ENCODE measurements at regions of chr2 and their contacts with region 1.

Region 1: GRCh38 chr2:136052369-136053362 is 65.3 kb downstream of the CXCR4 start:
- DNase-seq: no peak
- ATAC-seq: peak; percentile 67
- H3K4me3 ChIP-seq: no peak overlapping the region
- H3K27ac ChIP-seq: peak overlapping the region; percentile 42
- H3K4me1 ChIP-seq: peaks cover 36% of the 10 kb centered on the region
- H3K27me3 ChIP-seq: no peaks in the 10 kb centered on the region
- CTCF ChIP-seq: no peak
- EP300 ChIP-seq: peak in 1 of 2 experiments; percentile 77; a peak in 2 of 4 replicates
- POLR2A ChIP-seq: no peak
- RAD21 ChIP-seq: 0 out of 2 replicates have a peak, but pooled peaks have one; percentile 1

Region 2: GRCh38 chr2:135985018-135985825 is 67.4 kb before region 1 on chr2 and contains the start of gene DARS1:
- CTCF ChIA-PET with region 1: interaction called, 7 read pairs
- POLR2A ChIA-PET with region 1: interaction called, 68 read pairs
- RAD21 ChIA-PET with region 1: interaction called, 88 read pairs
- SMC1A ChIA-PET with region 1: interaction called, 102 read pairs
- in situ Hi-C with region 1: no loop called
- intact Hi-C with region 1: loop called (anchors 1 kb)
- DNase-seq: peak; percentile 79
- ATAC-seq: peak; percentile 86
- H3K4me3 ChIP-seq: peak within 1 kb of the TSS; percentile 88
- H3K27ac ChIP-seq: peak within 1 kb of the TSS; percentile 95
- H3K4me1 ChIP-seq: peaks cover 8% of the 10 kb centered on the region
- H3K27me3 ChIP-seq: no peaks in the 10 kb centered on the region
- CTCF ChIP-seq: no peak
- EP300 ChIP-seq: peak in 1 of 2 experiments; percentile 31; a peak in 2 of 4 replicates
- POLR2A ChIP-seq: peak; percentile 95
- RAD21 ChIP-seq: no peak
- polyA plus RNA-seq, gene DARS1: 102 to 134 TPM

Region 3: GRCh38 chr2:136019306-136019705 is 33.4 kb before region 1 on chr2:
- CTCF ChIA-PET with region 1: interaction called, 33 read pairs
- POLR2A ChIA-PET with region 1: interaction called, 80 read pairs
- RAD21 ChIA-PET with region 1: interaction called, 348 read pairs
- SMC1A ChIA-PET with region 1: interaction called, 961 read pairs
- in situ Hi-C with region 1: no loop called
- intact Hi-C with region 1: no loop called
- DNase-seq: peak; percentile 40
- ATAC-seq: peak; percentile 78
- H3K4me3 ChIP-seq: no peak overlapping the region
- H3K27ac ChIP-seq: no peak overlapping the region
- H3K4me1 ChIP-seq: peaks cover 8% of the 10 kb centered on the region
- H3K27me3 ChIP-seq: no peaks in the 10 kb centered on the region
- CTCF ChIP-seq: no peak
- EP300 ChIP-seq: peak; percentile 78 to 87; a peak in 2 of 4 replicates
- POLR2A ChIP-seq: no peak
- RAD21 ChIP-seq: 0 out of 2 replicates have a peak, but pooled peaks have one; percentile 6

Region 4: DNA sequence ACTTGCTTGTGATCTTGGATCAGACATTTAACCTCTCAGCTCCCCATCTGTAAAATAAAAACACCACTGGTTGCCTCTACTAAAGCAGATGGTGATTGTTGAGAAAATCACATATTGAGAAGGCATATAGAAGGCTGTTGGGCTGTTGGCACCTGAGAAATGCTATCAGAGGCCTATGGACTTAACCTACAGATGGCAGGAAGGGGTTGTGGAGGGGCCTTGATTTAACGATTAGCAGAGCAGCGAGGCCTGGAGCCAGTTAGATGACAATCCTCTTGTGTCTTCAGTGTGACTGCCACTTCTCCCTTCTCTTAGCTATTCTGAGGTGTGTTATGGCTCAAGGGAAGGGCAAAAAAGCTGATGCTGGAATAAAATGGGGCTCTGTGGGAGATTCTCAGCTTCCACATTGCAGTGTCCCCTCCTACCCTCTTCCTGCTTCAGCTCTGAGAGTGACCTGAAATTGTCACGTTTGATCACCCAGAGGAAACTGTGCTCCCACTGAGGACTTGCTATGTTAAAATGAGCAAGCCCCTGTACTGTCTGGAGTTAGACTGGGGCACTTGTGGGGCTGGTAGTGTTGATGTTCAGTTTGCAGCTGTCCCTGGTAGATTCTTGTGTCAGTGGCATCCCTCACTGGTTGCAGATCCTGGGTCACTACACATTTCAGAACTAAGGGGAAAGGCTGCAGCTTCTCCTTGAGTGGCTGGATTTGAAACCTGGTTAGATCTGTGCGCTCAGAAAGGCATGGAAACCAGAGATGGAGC is 33.8 kb after region 1 on chr2:
- CTCF ChIA-PET with region 1: no interaction called
- POLR2A ChIA-PET with region 1: no interaction called
- RAD21 ChIA-PET with region 1: interaction called, 5 read pairs
- SMC1A ChIA-PET with region 1: interaction called, 26 read pairs
- in situ Hi-C with region 1: no loop called
- intact Hi-C with region 1: no loop called
- DNase-seq: no peak
- ATAC-seq: peak; percentile 51
- H3K4me3 ChIP-seq: no peak overlapping the region
- H3K27ac ChIP-seq: no peak overlapping the region
- H3K4me1 ChIP-seq: no peaks in the 10 kb centered on the region
- H3K27me3 ChIP-seq: no peaks in the 10 kb centered on the region
- CTCF ChIP-seq: no peak
- EP300 ChIP-seq: no peak
- POLR2A ChIP-seq: no peak
- RAD21 ChIP-seq: no peak

Region 5: GRCh38 chr2:136129601-136130000 is 76.9 kb after region 1 on chr2:
- CTCF ChIA-PET with region 1: interaction called, 6 read pairs
- POLR2A ChIA-PET with region 1: interaction called, 28 read pairs
- RAD21 ChIA-PET with region 1: interaction called, 301 read pairs
- SMC1A ChIA-PET with region 1: interaction called, 234 read pairs
- in situ Hi-C with region 1: no loop called
- intact Hi-C with region 1: loop called (anchors 1 kb)
- DNase-seq: no peak
- ATAC-seq: no peak
- H3K4me3 ChIP-seq: no peak overlapping the region
- H3K27ac ChIP-seq: no peak overlapping the region
- H3K4me1 ChIP-seq: peaks cover 24% of the 10 kb centered on the region
- H3K27me3 ChIP-seq: peaks cover 0 to 9% of the 10 kb centered on the region in 2 experiments; a peak in 2 of 4 replicates
- CTCF ChIP-seq: no peak
- EP300 ChIP-seq: peak in 1 of 2 experiments; percentile 73; a peak in 2 of 4 replicates
- POLR2A ChIP-seq: no peak
- RAD21 ChIP-seq: no peak

Region 6: GRCh38 chr2:136238286-136239078 is 185.8 kb after region 1 on chr2:
- CTCF ChIA-PET with region 1: no interaction called
- POLR2A ChIA-PET with region 1: interaction called, 4 read pairs
- RAD21 ChIA-PET with region 1: interaction called, 57 read pairs
- SMC1A ChIA-PET with region 1: interaction called, 14 read pairs
- in situ Hi-C with region 1: no loop called
- intact Hi-C with region 1: no loop called
- DNase-seq: peak; percentile 78
- ATAC-seq: peak; percentile 89
- H3K4me3 ChIP-seq: no peak overlapping the region
- H3K27ac ChIP-seq: no peak overlapping the region
- H3K4me1 ChIP-seq: peaks cover 18% of the 10 kb centered on the region
- H3K27me3 ChIP-seq: no peaks in the 10 kb centered on the region
- CTCF ChIP-seq: no peak
- EP300 ChIP-seq: peak; percentile 97 to 99
- POLR2A ChIP-seq: no peak
- RAD21 ChIP-seq: no peak